ENCODE measurements at regions of chr5 and their contacts with region 1.

Region 1: DNA sequence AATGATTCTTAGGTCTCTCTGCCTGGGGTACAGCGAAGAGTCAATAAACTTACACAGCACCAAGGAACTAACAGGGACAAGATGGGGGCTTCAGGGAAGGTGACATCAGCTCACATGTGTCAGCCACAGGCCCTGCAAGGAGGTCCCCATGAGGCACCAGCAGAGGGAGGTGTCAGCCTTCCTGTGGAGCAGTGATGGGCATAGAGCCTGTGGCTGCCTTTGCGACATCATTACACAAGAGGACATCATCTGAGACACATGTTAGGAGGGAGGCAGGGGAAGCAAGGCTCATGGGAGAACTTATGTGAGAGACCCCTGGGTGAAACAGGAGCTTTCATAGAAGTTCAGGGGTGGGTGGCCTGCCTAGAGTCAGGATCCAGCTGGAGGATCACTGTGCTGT is 389.6 kb downstream of the SEMA5A start:
- DNase-seq: peak; percentile 86
- ATAC-seq: peak; percentile 87
- H3K4me3 ChIP-seq: no peak overlapping the region
- H3K27ac ChIP-seq: no peak overlapping the region
- H3K4me1 ChIP-seq: peaks cover 14% of the 10 kb centered on the region
- H3K27me3 ChIP-seq: no peaks in the 10 kb centered on the region
- CTCF ChIP-seq: peak; percentile 95

Region 2: DNA sequence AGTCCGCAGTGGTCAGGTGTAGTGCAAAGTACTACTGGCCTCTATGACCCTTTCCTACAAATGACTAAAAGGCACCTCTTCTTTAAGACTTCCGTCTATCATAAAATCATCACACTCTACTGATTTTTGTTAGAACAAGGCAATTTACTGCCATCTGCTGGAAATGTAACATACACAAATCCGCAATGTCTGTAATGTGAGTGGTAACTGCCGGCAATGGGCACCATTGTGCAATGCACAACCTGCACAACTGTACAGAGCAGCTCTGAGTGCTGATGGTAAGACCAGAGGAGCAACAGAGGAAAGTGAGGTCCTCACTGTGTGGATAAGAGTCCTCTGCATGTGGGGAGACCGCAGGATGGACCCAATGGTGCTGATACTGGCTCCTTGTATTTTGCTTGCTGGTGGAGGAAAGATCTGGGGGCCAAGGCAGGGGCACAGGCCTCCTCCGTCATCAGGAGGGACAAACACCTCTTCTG is 989.7 kb after region 1 on chr5:
- CTCF ChIA-PET with region 1: no interaction called
- POLR2A ChIA-PET with region 1: no interaction called
- intact Hi-C with region 1: loop called (anchors 10 kb)
- DNase-seq: peak; percentile 87
- ATAC-seq: peak; percentile 91
- H3K4me3 ChIP-seq: no peak overlapping the region
- H3K27ac ChIP-seq: no peak overlapping the region
- H3K4me1 ChIP-seq: no peaks in the 10 kb centered on the region
- H3K27me3 ChIP-seq: no peaks in the 10 kb centered on the region
- CTCF ChIP-seq: peak; percentile 91